PC-9 (cell line): ENCODE measurements at regions of chr20 and their contacts with region 1.

Region 1: GRCh38 chr20:561437-562231 is 18.0 kb upstream of the CSNK2A1 start:
- DNase-seq: peak in 1 of 2 experiments; percentile 73
- H3K4me3 ChIP-seq: no peak overlapping the region
- H3K27ac ChIP-seq: no peak overlapping the region
- H3K4me1 ChIP-seq: no peaks in the 10 kb centered on the region
- H3K27me3 ChIP-seq: no peaks in the 10 kb centered on the region
- CTCF ChIP-seq: peak; percentile 95

Region 2: GRCh38 chr20:543369-544152 is 18.1 kb before region 1 on chr20 and contains the start of gene CSNK2A1:
- CTCF ChIA-PET with region 1: no interaction called
- POLR2A ChIA-PET with region 1: no interaction called
- intact Hi-C with region 1: no loop called
- DNase-seq: peak; percentile 84 to 96
- H3K4me3 ChIP-seq: peak within 1 kb of the TSS; percentile 95
- H3K27ac ChIP-seq: peak within 1 kb of the TSS; percentile 62
- H3K4me1 ChIP-seq: peaks cover 11% of the 10 kb centered on the region
- H3K27me3 ChIP-seq: no peaks in the 10 kb centered on the region
- CTCF ChIP-seq: no peak
- total RNA-seq, gene CSNK2A1: 187 and 222 TPM in 2 replicates

Region 3: GRCh38 chr20:621125-621756 is 59.6 kb after region 1 on chr20:
- CTCF ChIA-PET with region 1: no interaction called
- POLR2A ChIA-PET with region 1: no interaction called
- intact Hi-C with region 1: no loop called
- DNase-seq: no peak
- H3K4me3 ChIP-seq: no peak overlapping the region
- H3K27ac ChIP-seq: no peak overlapping the region
- H3K4me1 ChIP-seq: no peaks in the 10 kb centered on the region
- H3K27me3 ChIP-seq: peaks cover 86% of the 10 kb centered on the region
- CTCF ChIP-seq: no peak

Region 4: DNA sequence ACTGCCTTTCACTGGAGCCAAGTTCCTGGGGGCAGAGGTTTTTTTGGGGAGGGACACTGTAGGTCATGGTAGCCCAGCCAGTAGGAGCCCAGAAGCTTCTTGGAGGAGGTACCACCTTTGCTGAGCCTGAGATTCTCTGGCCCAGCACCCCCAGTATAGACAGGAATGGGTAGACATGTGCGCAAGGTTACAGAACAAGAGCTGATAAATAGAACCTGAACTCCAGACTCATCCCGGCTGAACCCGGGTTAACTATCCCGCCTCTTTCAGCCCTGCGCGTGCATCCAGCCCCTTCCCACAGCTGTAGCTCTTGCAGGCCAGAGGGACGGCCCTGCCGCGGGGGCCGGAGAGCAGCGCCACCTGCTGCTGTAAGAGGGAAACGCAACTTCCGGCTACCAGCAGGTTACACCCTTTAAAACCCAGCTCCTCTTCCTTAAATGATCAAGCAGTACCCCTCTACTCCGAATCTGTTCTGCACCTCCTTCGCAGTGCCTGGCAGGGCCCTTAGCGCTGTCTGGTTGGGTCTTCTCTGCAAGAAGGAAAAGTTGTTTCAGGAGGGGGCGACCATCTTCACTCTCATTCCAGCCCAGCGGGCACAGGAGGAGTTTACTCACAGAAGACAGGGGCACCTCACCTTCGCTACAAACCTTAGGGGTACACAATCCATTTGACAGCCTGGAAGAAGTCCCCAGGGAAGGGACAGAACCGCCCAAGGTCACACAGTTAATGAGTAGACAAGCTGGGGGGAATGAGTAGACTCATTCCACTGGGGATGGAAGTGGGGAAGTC is 83.9 kb after region 1 on chr20:
- CTCF ChIA-PET with region 1: interaction called, 5 read pairs
- POLR2A ChIA-PET with region 1: no interaction called
- intact Hi-C with region 1: loop called (anchors 1 kb)
- DNase-seq: peak; percentile 57 to 79
- H3K4me3 ChIP-seq: no peak overlapping the region
- H3K27ac ChIP-seq: no peak overlapping the region
- H3K4me1 ChIP-seq: 0 out of 2 replicates have a peak, but pooled peaks cover 6% of the 10 kb centered on the region
- H3K27me3 ChIP-seq: no peaks in the 10 kb centered on the region
- CTCF ChIP-seq: peak; percentile 93

Region 5: GRCh38 chr20:728248-728944 is 166.8 kb after region 1 on chr20:
- CTCF ChIA-PET with region 1: no interaction called
- POLR2A ChIA-PET with region 1: no interaction called
- intact Hi-C with region 1: loop called (anchors 2 kb)
- DNase-seq: peak in 1 of 2 experiments; percentile 67
- H3K4me3 ChIP-seq: no peak overlapping the region
- H3K27ac ChIP-seq: no peak overlapping the region
- H3K4me1 ChIP-seq: no peaks in the 10 kb centered on the region
- H3K27me3 ChIP-seq: peaks cover 42% of the 10 kb centered on the region
- CTCF ChIP-seq: peak; percentile 66

Region 6: GRCh38 chr20:768426-768978 is 206.9 kb after region 1 on chr20 and contains the start of gene SLC52A3:
- CTCF ChIA-PET with region 1: interaction called, 4 read pairs
- POLR2A ChIA-PET with region 1: no interaction called
- intact Hi-C with region 1: loop called (anchors 1 kb)
- DNase-seq: peak; percentile 94 to 97
- H3K4me3 ChIP-seq: peak within 1 kb of the TSS; percentile 53
- H3K27ac ChIP-seq: peak within 1 kb of the TSS; percentile 70
- H3K4me1 ChIP-seq: peaks cover 35% of the 10 kb centered on the region
- H3K27me3 ChIP-seq: no peaks in the 10 kb centered on the region
- CTCF ChIP-seq: peak; percentile 83
- total RNA-seq, gene SLC52A3: 6.9 and 7.2 TPM in 2 replicates